Posterior vena cava (tissue), 2 donors: ENCODE measurements at regions of chr1 and their contacts with region 1.

Region 1: GRCh38 chr1:202315576-202316168 is 26.1 kb downstream of the UBE2T start:
- DNase-seq: peak; percentile 88

Region 2: GRCh38 chr1:202184750-202185460 is 130.8 kb before region 1 on chr1:
- intact Hi-C with region 1: loop called in 1 of 2 experiments (anchors 5 kb)
- DNase-seq: peak; percentile 93

Region 3: DNA sequence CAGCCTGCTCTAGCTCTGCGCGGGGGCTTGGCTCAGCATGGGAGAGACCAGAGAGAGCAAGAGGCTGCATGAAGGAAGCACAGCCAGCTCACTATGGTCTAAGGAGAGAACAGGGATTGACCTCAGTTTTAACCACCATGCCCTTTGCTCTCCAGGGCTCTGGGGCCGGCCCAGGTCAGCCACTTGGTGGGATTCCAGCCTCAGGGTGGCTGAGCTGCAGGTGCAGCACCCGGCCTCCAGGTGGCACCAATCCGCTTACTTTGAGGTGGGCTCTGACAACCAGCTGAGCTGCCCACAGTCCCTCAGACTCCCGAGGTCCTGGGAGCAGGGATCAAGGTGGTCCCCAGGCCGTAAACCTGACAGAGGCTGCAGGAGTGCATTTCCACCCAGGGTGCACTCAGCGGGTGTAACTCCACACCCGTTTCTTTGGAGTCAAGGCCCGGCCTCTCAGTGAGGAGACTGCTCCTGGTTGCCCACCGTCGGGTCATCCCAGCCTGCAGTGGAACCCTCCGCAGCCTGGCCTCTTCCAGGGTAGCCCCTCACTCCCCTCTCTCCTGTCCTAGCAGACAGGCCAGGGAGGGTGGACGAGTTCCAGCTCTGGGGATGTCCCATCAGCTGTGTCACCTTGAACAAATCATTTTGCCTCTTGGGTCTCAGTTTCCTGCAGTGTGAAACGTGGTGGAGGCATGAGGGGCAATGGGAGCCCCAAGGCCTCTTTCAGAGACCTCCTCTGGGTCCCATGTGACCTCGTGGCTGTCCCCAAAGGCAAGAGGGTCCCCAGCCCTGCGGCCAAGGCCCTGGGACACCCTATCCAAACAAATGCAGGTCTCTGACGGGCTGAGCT is 122.7 kb before region 1 on chr1:
- intact Hi-C with region 1: loop called (anchors 2 to 5 kb)
- DNase-seq: no peak

Region 4: GRCh38 chr1:202397256-202397655 is 81.6 kb after region 1 on chr1:
- intact Hi-C with region 1: no loop called
- DNase-seq: no peak